CD4-positive, alpha-beta T cell (primary cell): ENCODE measurements at regions of chr14 and their contacts with region 1.

Region 1: GRCh38 chr14:64503478-64504309 is at the start of gene ZBTB25:
- DNase-seq: peak; percentile 91 to 100 (median 94)
- ATAC-seq: peak; percentile 64
- H3K4me3 ChIP-seq: peak within 1 kb of the TSS; percentile 96
- H3K4me3 Mint-ChIP-seq: peak within 1 kb of the TSS; percentile 100
- H3K27ac ChIP-seq: peak within 1 kb of the TSS; percentile 100
- H3K27ac Mint-ChIP-seq: peak within 1 kb of the TSS; percentile 100
- H3K4me1 ChIP-seq: peaks cover 60% of the 10 kb centered on the region
- H3K4me1 Mint-ChIP-seq: peaks cover 78% of the 10 kb centered on the region
- H3K27me3 ChIP-seq: no peaks in the 10 kb centered on the region
- H3K27me3 Mint-ChIP-seq: peaks cover 4% of the 10 kb centered on the region
- CTCF ChIP-seq: no peak
- total RNA-seq, gene ZBTB25: 56.8 to 58.1 TPM

Region 2: DNA sequence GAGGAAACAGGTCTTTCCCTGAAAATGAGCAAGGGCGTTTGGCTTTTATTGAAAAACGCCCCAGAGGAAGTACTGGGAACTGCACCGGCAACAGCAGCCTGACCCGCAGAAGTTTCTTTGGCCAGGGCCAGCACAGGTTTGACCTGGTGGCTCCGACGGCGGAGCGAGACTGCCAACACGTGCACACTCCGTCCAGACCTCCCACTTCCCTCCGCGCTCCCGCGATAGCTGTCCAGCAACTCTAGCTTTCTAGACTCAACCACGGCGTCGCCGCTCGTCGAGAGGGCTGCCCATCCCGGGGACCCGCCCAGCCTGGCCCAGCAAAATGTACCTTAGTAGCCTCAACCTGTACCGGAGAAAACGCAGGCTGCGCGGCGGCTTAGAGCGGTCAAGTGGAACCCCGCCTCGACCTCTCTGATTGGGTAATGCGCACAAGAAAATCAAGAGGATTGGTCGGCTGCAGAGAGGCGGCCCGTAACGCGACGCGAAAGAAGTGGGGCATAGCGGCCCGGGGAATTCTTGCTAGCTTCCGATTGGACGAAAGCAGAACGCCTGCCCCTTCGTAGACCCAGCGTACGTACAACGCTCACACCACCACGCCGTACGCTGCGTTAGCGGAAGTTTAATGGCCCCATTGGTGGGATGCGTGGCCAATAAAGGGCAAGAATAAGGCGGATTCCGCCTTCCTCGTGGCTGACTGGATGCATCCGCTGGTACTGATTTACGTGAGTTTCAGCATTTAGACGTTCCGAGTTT is 862.0 kb before region 1 on chr14 and contains the start of gene WDR89:
- CTCF ChIA-PET with region 1: interaction called, 3 read pairs
- POLR2A ChIA-PET with region 1: interaction called, 16 read pairs
- intact Hi-C with region 1: loop called (anchors 10 kb)
- DNase-seq: peak; percentile 90 to 99 (median 94)
- ATAC-seq: peak; percentile 83
- H3K4me3 ChIP-seq: peak within 1 kb of the TSS; percentile 96
- H3K4me3 Mint-ChIP-seq: peak within 1 kb of the TSS; percentile 91
- H3K27ac ChIP-seq: peak within 1 kb of the TSS; percentile 98 to 99
- H3K27ac Mint-ChIP-seq: peak within 1 kb of the TSS; percentile 91
- H3K4me1 ChIP-seq: peaks cover 27% of the 10 kb centered on the region
- H3K4me1 Mint-ChIP-seq: peaks cover 43% of the 10 kb centered on the region
- H3K27me3 ChIP-seq: no peaks in the 10 kb centered on the region
- H3K27me3 Mint-ChIP-seq: no peaks in the 10 kb centered on the region
- CTCF ChIP-seq: peak; percentile 47
- total RNA-seq, gene WDR89: 12.4 to 13.4 TPM

Region 3: GRCh38 chr14:63922696-63923421 is 580.8 kb before region 1 on chr14:
- CTCF ChIA-PET with region 1: no interaction called
- POLR2A ChIA-PET with region 1: no interaction called
- intact Hi-C with region 1: no loop called
- DNase-seq: peak in 2 of 14 experiments; percentile 11 to 42
- ATAC-seq: no peak
- H3K4me3 ChIP-seq: no peak overlapping the region
- H3K4me3 Mint-ChIP-seq: no peak overlapping the region
- H3K27ac ChIP-seq: no peak overlapping the region
- H3K27ac Mint-ChIP-seq: no peak overlapping the region
- H3K4me1 ChIP-seq: peaks cover 5% of the 10 kb centered on the region
- H3K4me1 Mint-ChIP-seq: peaks cover 9% of the 10 kb centered on the region
- H3K27me3 ChIP-seq: no peaks in the 10 kb centered on the region
- H3K27me3 Mint-ChIP-seq: no peaks in the 10 kb centered on the region
- CTCF ChIP-seq: no peak

Region 4: DNA sequence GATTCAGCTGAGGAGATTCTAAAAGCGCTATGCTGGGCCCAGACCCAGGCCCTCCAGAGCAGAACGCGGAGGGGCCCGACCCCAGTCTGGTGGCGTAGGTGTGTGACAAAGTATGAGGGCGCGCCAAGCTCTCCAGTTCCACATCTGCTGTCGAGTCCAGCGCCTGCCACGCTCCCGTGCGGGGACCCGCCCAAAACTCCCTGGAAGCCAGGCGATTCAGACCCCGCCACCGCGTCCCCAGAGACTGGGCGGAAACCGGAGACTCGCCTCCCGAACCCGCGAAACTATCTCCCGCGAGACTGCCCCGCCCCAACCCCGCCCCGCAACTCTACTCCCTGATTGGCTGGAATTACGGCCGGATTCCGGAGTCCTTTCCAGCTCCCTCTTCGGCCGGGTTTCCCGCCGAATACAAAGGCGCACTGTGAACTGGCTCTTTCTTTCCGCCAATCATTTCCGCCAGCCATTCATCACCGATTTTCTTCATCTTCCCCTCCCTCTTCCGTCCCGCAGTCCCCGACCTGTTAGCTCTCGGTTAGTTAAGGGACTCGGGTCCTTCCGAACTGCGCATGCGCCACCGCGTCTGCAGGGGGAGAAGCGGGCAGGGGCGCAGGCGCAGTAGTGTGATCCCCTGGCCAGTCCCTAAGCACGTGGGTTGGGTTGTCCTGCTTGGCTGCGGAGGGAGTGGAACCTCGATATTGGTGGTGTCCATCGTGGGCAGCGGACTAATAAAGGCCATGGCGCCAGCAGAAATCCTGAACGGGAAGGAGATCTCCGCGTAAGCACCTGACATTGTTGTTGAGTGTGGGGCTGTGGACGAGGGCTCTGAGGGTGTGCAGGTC is 115.8 kb before region 1 on chr14 and contains the start of gene MTHFD1:
- CTCF ChIA-PET with region 1: no interaction called
- POLR2A ChIA-PET with region 1: interaction called, 51 read pairs
- intact Hi-C with region 1: loop called (anchors 5 kb)
- DNase-seq: peak; percentile 89 to 99 (median 96)
- ATAC-seq: peak; percentile 88
- H3K4me3 ChIP-seq: peak within 1 kb of the TSS; percentile 83
- H3K4me3 Mint-ChIP-seq: peak within 1 kb of the TSS; percentile 94
- H3K27ac ChIP-seq: peak within 1 kb of the TSS; percentile 43 to 55
- H3K27ac Mint-ChIP-seq: peak within 1 kb of the TSS; percentile 85
- H3K4me1 ChIP-seq: peaks cover 27% of the 10 kb centered on the region
- H3K4me1 Mint-ChIP-seq: peaks cover 33% of the 10 kb centered on the region
- H3K27me3 ChIP-seq: no peaks in the 10 kb centered on the region
- H3K27me3 Mint-ChIP-seq: no peaks in the 10 kb centered on the region
- CTCF ChIP-seq: no peak
- total RNA-seq, gene MTHFD1: 13.3 to 18.9 TPM

Region 5: DNA sequence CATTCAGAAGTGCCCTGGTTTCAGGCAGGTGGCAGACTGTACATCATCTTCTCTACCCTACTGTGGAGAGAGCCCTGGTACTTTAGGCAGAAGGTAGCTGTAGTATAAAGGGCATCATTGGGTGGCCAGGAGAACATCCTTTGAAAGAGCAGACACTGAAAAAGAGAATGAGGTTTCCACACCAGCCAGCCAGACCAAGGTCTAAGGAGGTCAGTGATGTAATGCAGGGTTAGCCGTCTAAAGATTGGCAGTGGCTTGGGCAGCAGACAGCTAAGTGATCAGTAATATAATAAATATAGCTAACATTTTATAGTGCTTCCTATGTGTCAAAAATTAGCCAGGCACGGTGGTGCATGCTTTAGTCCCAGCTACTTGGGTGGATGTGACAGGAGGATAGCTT is 12.1 kb before region 1 on chr14:
- CTCF ChIA-PET with region 1: interaction called, 55 read pairs
- POLR2A ChIA-PET with region 1: interaction called, 112 read pairs
- intact Hi-C with region 1: no loop called
- DNase-seq: no peak
- ATAC-seq: no peak
- H3K4me3 ChIP-seq: no peak overlapping the region
- H3K4me3 Mint-ChIP-seq: peak overlapping the region; percentile 38
- H3K27ac ChIP-seq: no peak overlapping the region
- H3K27ac Mint-ChIP-seq: peak overlapping the region; percentile 22
- H3K4me1 ChIP-seq: peaks cover 23% of the 10 kb centered on the region
- H3K4me1 Mint-ChIP-seq: peaks cover 66% of the 10 kb centered on the region
- H3K27me3 ChIP-seq: no peaks in the 10 kb centered on the region
- H3K27me3 Mint-ChIP-seq: no peaks in the 10 kb centered on the region
- CTCF ChIP-seq: no peak

Region 6: GRCh38 chr14:64914237-64914971 is 410.7 kb after region 1 on chr14 and contains the start of gene CHURC1:
- CTCF ChIA-PET with region 1: no interaction called
- POLR2A ChIA-PET with region 1: interaction called, 4 read pairs
- intact Hi-C with region 1: loop called in 1 of 2 experiments (anchors 10 kb)
- DNase-seq: peak; percentile 94 to 99 (median 96)
- ATAC-seq: peak; percentile 95
- H3K4me3 ChIP-seq: peak within 1 kb of the TSS; percentile 86
- H3K4me3 Mint-ChIP-seq: peak within 1 kb of the TSS; percentile 93
- H3K27ac ChIP-seq: peak within 1 kb of the TSS; percentile 99
- H3K27ac Mint-ChIP-seq: peak within 1 kb of the TSS; percentile 88
- H3K4me1 ChIP-seq: peaks cover 34% of the 10 kb centered on the region
- H3K4me1 Mint-ChIP-seq: peaks cover 57% of the 10 kb centered on the region
- H3K27me3 ChIP-seq: peaks cover 0 to under 1% of the 10 kb centered on the region in 2 experiments
- H3K27me3 Mint-ChIP-seq: no peaks in the 10 kb centered on the region
- CTCF ChIP-seq: no peak
- total RNA-seq, gene CHURC1: 50.1 to 54.0 TPM